GM12878 (cell line): ENCODE measurements at regions of chr7 and their contacts with region 1.

Region 1: GRCh38 chr7:87797798-87798403 is 78.3 kb downstream of the SLC25A40 start:
- DNase-seq: peak; percentile 45
- ATAC-seq: peak; percentile 96
- H3K4me3 ChIP-seq: no peak overlapping the region
- H3K27ac ChIP-seq: no peak overlapping the region
- H3K4me1 ChIP-seq: no peaks in the 10 kb centered on the region
- H3K27me3 ChIP-seq: no peaks in the 10 kb centered on the region
- CTCF ChIP-seq: peak; percentile 56 to 81 (median 59); a peak in 4 of 6 replicates
- EP300 ChIP-seq: no peak
- POLR2A ChIP-seq: no peak
- RAD21 ChIP-seq: peak; percentile 89

Region 2: GRCh38 chr7:87001214-87001613 is 796.7 kb before region 1 on chr7:
- CTCF ChIA-PET with region 1: no interaction called
- POLR2A ChIA-PET with region 1: no interaction called
- RAD21 ChIA-PET with region 1: no interaction called
- SMC1A ChIA-PET with region 1: no interaction called
- in situ Hi-C with region 1: no loop called
- intact Hi-C with region 1: no loop called
- DNase-seq: no peak
- ATAC-seq: no peak
- H3K4me3 ChIP-seq: no peak overlapping the region
- H3K27ac ChIP-seq: no peak overlapping the region
- H3K4me1 ChIP-seq: no peaks in the 10 kb centered on the region
- H3K27me3 ChIP-seq: no peaks in the 10 kb centered on the region
- CTCF ChIP-seq: no peak
- EP300 ChIP-seq: no peak
- POLR2A ChIP-seq: no peak
- RAD21 ChIP-seq: no peak

Region 3: DNA sequence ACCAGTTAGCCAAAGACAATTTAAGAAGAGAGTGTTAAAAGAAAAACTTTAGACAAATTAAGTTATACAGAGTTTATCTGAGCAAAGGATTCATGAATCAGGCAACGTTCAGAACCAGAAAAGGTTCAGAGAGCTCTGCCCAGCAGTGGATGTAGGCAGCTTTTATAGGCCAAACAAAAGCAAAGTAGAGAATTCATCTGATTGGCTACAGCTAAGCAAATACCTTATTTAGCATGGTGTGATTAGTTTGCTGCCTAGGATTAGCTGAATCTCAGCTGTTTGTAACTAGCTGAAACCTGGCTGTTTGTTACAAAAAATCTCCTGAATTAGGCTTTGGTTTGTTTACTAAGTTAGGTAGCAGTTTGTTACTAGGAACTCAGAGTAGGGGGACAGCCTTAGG is 12.2 kb after region 1 on chr7:
- CTCF ChIA-PET with region 1: interaction called, 21 read pairs
- POLR2A ChIA-PET with region 1: no interaction called
- RAD21 ChIA-PET with region 1: no interaction called
- SMC1A ChIA-PET with region 1: interaction called, 5 read pairs
- in situ Hi-C with region 1: no loop called
- intact Hi-C with region 1: no loop called
- DNase-seq: no peak
- ATAC-seq: peak; percentile 28; the same call in 2 of the 3 replicates
- H3K4me3 ChIP-seq: no peak overlapping the region
- H3K27ac ChIP-seq: no peak overlapping the region
- H3K4me1 ChIP-seq: no peaks in the 10 kb centered on the region
- H3K27me3 ChIP-seq: no peaks in the 10 kb centered on the region
- CTCF ChIP-seq: no peak
- EP300 ChIP-seq: no peak
- POLR2A ChIP-seq: no peak
- RAD21 ChIP-seq: no peak

Region 4: GRCh38 chr7:87837597-87837996 is 39.7 kb after region 1 on chr7:
- CTCF ChIA-PET with region 1: no interaction called
- POLR2A ChIA-PET with region 1: no interaction called
- RAD21 ChIA-PET with region 1: no interaction called
- SMC1A ChIA-PET with region 1: interaction called, 11 read pairs
- in situ Hi-C with region 1: no loop called
- intact Hi-C with region 1: no loop called
- DNase-seq: no peak
- ATAC-seq: no peak
- H3K4me3 ChIP-seq: no peak overlapping the region
- H3K27ac ChIP-seq: no peak overlapping the region
- H3K4me1 ChIP-seq: no peaks in the 10 kb centered on the region
- H3K27me3 ChIP-seq: no peaks in the 10 kb centered on the region
- CTCF ChIP-seq: no peak
- EP300 ChIP-seq: no peak
- POLR2A ChIP-seq: no peak
- RAD21 ChIP-seq: no peak